ENCODE measurements at regions of chr22 and their contacts with region 1.

Region 1: DNA sequence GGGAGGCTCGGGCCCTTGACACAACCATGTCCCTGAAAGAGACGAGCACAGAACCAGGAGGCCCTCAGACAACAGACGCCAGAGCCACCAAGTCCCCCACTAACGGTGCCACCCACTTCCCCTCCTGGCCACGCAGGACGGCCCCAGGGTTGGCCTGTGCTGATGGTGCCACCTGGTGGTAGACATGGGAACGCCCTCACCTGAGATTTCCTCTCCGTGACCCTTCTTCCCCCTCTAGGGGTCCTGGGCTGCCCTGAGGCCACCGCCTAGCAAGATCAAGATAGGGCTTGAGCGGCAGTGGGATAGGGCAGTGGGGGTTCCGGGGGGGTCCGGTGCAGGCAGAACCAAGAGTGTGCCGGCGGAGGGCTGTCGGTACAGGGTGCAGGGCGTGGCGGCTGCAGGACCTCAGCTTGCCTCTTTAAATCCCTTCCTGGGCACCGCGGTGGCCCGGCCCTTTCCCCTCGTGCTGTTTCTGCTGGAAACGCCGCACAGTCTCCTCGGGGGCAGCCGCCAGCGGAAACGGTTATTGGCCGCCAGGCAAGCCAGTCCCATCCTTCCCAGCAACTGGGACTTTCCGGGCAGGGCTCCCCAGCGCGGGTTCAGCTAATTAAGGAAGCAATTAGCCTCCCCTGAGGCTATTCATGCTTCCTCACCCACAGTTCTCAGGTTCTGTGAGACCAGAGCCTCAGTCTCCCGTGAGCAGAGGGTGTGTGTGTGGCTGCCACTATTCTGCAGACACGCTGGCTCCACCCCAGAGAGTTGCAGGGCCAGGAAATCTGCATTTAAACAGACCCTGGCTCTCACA is 5.5 kb upstream of the NFAM1 start:
- DNase-seq: peak; percentile 93

Region 2: GRCh38 chr22:41966607-41967240 is 471.0 kb before region 1 on chr22:
- intact Hi-C with region 1: loop called in 1 of 2 experiments (anchors 10 kb)
- DNase-seq: no peak

Region 3: DNA sequence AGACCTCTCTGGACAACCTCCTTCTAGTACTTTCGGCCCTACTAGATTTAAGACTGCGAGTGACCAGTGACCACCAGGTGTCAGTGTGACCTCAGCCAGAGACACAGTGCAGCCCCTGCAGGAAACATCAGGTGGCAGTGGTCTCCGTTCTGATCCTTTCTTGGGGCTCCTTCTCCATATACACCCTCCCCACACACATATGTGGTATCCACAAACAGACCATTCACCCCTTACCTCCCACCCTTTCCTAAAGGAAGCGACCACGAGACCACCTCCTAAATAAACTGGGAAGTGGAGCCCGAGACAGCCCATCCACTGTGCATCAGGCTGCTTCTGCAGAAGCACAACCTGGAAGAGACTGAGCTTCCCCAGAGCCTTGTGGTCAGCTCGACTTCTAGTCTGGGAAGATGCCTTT is 268.6 kb before region 1 on chr22:
- intact Hi-C with region 1: loop called (anchors 2 to 5 kb)
- DNase-seq: no peak

Region 4: GRCh38 chr22:42270512-42271417 is 166.9 kb before region 1 on chr22 and contains the start of gene TCF20:
- intact Hi-C with region 1: loop called in 1 of 2 experiments (anchors 5 kb)
- DNase-seq: peak; percentile 93
- total RNA-seq, gene TCF20: 26.9 to 27.2 TPM

Region 5: DNA sequence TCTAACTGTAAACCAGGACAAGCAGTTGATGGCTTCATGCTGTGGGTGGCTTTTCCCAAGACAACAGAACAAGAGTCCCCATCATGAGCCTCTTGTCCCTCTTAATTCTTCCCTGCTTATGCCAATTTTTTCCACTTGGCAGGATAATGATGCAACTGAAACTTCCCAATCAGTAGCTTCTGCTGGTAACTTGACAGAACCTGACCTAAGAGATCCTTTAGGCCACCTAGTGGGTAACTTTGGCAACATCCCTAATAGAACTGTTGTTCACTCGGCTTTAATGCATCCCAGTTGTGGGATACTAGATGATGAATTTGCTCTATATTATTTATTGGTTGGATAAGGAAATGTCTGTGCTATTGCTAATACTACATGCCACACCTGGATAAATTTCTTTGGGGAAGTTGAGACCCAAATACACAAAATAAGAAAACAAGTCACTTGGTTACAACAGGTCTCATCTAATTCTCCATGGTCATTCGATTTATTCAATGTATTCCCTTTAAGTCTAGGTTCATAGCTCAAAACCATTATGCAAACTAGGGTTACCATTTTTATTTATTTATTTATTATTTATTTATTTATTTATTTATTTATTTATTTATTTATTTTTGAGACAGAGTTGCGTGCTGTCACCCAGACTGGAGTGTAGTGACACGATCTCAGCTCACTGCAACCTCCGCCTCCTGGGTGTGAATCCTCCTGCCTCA is 35.9 kb after region 1 on chr22:
- intact Hi-C with region 1: no loop called
- DNase-seq: no peak

Measured in posterior vena cava (tissue), 2 donors.